ENCODE measurements at regions of chr20 and their contacts with region 1.

Region 1: DNA sequence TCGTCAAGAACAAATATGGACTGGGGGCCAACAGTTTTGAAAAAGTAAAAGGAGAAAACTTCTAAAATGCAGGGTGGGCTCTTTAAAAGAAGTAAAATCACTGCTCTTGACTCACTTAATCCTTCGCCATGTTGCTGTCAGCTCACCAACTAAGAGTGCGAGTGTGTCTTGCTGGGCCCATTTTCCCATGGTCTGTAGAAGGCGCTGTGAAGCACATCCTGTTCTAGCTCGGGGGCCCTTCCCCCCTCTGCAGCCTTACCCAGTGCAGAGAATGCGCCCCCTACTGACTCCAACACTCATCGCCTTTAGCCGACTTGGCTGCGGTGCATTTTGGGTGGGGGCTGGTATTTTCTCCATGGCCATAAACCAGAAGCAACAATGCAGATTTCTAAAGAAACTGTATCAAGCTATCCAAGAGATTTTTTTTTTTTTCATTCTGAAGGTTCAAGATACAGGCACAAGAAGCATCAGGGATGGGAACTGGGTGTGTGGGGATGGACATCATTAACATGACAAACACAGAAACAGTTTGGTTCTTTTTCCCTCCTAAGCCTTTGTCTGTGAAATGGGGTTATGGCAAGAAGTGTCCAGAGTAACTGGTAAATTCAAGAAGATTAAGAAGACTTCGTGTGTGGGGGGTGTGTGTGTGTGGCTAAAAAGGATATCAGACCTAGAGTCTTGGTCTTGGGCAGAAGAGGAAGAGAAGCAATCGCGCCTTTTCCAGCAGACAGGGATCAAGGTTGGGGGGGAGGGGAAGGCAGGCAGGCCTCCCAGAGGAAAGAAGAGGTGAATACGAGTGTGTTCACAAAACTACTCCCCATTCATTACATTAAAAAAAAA is 1.7 kb downstream of the ADNP start:
- DNase-seq: peak; percentile 97
- ATAC-seq: peak; percentile 87
- H3K4me3 ChIP-seq: peak overlapping the region; percentile 82 to 97 (median 96)
- H3K27ac ChIP-seq: peak overlapping the region; percentile 73
- H3K4me1 ChIP-seq: peaks cover 40% of the 10 kb centered on the region
- H3K27me3 ChIP-seq: no peaks in the 10 kb centered on the region
- CTCF ChIP-seq: peak; percentile 99
- EP300 ChIP-seq: peak; percentile 63 to 94
- POLR2A ChIP-seq: peak in 1 of 2 experiments; percentile 43; a peak in 1 of 4 replicates
- RAD21 ChIP-seq: peak; percentile 96

Region 2: DNA sequence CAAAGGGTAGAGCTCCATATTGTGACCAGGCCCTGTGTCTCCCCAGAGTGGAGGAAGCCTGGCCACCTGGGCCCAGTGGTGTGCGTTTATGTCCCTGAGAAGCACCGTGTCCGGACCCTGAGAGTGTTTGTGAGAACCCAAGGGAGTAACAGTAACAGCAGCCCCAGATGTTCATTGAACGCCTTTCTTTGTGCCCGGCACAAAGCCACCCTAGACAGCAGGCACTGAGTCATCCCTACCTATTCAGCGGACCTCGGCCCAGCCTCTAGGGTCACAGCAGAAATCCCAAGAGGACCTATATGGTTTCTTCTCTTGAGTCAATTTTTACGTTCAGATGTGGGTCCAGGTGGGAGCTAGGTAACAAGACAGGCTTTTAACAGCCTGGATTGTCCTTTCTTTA is 110.2 kb before region 1 on chr20:
- CTCF ChIA-PET with region 1: interaction called, 32 read pairs
- POLR2A ChIA-PET with region 1: interaction called, 39 read pairs
- in situ Hi-C with region 1: no loop called
- intact Hi-C with region 1: loop called (anchors 1 kb)
- DNase-seq: no peak
- ATAC-seq: no peak
- H3K4me3 ChIP-seq: no peak overlapping the region
- H3K27ac ChIP-seq: no peak overlapping the region
- H3K4me1 ChIP-seq: peaks cover 25% of the 10 kb centered on the region
- H3K27me3 ChIP-seq: no peaks in the 10 kb centered on the region
- CTCF ChIP-seq: no peak
- EP300 ChIP-seq: no peak
- POLR2A ChIP-seq: no peak
- RAD21 ChIP-seq: no peak

Region 3: GRCh38 chr20:50856036-50856756 is 73.3 kb before region 1 on chr20:
- CTCF ChIA-PET with region 1: no interaction called
- POLR2A ChIA-PET with region 1: no interaction called
- in situ Hi-C with region 1: no loop called
- intact Hi-C with region 1: loop called (anchors 5 kb)
- DNase-seq: peak; percentile 89
- ATAC-seq: peak; percentile 82
- H3K4me3 ChIP-seq: peak overlapping the region in 1 of 3 experiments; percentile 39; a peak in 2 of 6 replicates
- H3K27ac ChIP-seq: no peak overlapping the region
- H3K4me1 ChIP-seq: peaks cover 43% of the 10 kb centered on the region
- H3K27me3 ChIP-seq: no peaks in the 10 kb centered on the region; a peak in 1 of 5 replicates
- CTCF ChIP-seq: peak; percentile 24; the same call in 1 of the 2 replicates
- EP300 ChIP-seq: peak in 1 of 2 experiments; percentile 47; a peak in 1 of 4 replicates
- POLR2A ChIP-seq: no peak
- RAD21 ChIP-seq: no peak

Region 4: GRCh38 chr20:50895111-50895830 is 34.2 kb before region 1 on chr20:
- CTCF ChIA-PET with region 1: no interaction called
- POLR2A ChIA-PET with region 1: interaction called, 20 read pairs
- in situ Hi-C with region 1: no loop called
- intact Hi-C with region 1: no loop called
- DNase-seq: peak; percentile 86
- ATAC-seq: peak; percentile 92
- H3K4me3 ChIP-seq: no peak overlapping the region
- H3K27ac ChIP-seq: peak overlapping the region; percentile 54
- H3K4me1 ChIP-seq: peaks cover 26% of the 10 kb centered on the region
- H3K27me3 ChIP-seq: no peaks in the 10 kb centered on the region
- CTCF ChIP-seq: no peak
- EP300 ChIP-seq: peak in 1 of 2 experiments; percentile 13; a peak in 1 of 4 replicates
- POLR2A ChIP-seq: no peak
- RAD21 ChIP-seq: no peak

Region 5: GRCh38 chr20:50958615-50959542 is 29.4 kb after region 1 on chr20 and contains the start of gene MOCS3:
- CTCF ChIA-PET with region 1: interaction called, 9 read pairs
- POLR2A ChIA-PET with region 1: interaction called, 87 read pairs
- in situ Hi-C with region 1: no loop called
- intact Hi-C with region 1: loop called (anchors 2 kb)
- DNase-seq: peak; percentile 97
- ATAC-seq: peak; percentile 84
- H3K4me3 ChIP-seq: peak within 1 kb of the TSS; percentile 85 to 97 (median 97)
- H3K27ac ChIP-seq: peak within 1 kb of the TSS; percentile 86
- H3K4me1 ChIP-seq: peaks cover 44% of the 10 kb centered on the region
- H3K27me3 ChIP-seq: no peaks in the 10 kb centered on the region; a peak in 1 of 5 replicates
- CTCF ChIP-seq: peak; percentile 14; the same call in 1 of the 2 replicates
- EP300 ChIP-seq: no peak
- POLR2A ChIP-seq: peak; percentile 55 to 82
- RAD21 ChIP-seq: 0 out of 2 replicates have a peak, but pooled peaks have one; percentile 42
- total RNA-seq, gene MOCS3: 8.4 and 9.7 TPM in 2 replicates

Region 6: DNA sequence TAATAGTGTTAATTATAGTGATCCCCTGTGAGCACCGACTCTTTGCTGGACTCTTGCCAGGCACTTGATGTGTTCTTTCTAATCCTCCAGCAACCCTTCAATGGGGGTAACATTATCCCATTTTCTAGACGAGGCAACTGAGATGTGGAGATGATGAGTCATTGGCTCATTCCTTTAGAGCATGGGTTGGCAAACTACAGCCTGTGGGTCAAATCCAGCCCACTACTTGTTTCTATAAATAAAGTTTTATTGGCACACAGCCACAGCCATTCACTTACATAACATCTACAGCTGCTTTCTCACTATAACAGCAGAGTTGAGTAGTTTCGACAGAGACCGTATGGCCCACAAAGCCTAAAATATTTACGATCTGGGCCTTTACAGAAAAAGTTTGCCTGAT is 342.9 kb after region 1 on chr20:
- CTCF ChIA-PET with region 1: no interaction called
- POLR2A ChIA-PET with region 1: no interaction called
- in situ Hi-C with region 1: no loop called
- intact Hi-C with region 1: no loop called
- DNase-seq: no peak
- ATAC-seq: no peak
- H3K4me3 ChIP-seq: no peak overlapping the region
- H3K27ac ChIP-seq: no peak overlapping the region
- H3K4me1 ChIP-seq: no peaks in the 10 kb centered on the region
- H3K27me3 ChIP-seq: peaks cover 0 to 29% of the 10 kb centered on the region in 2 experiments; a peak in 3 of 5 replicates
- CTCF ChIP-seq: no peak
- EP300 ChIP-seq: no peak
- POLR2A ChIP-seq: no peak
- RAD21 ChIP-seq: no peak

Measured in HepG2 (cell line).